ENCODE measurements at regions of chr4 and their contacts with region 1.

Region 1: GRCh38 chr4:56977321-56978012 is at the start of gene NOA1:
- DNase-seq: peak; percentile 99
- ATAC-seq: peak; percentile 79 to 88 (median 85)
- H3K4me3 ChIP-seq: peak within 1 kb of the TSS; percentile 99
- H3K4me3 Mint-ChIP-seq: peak within 1 kb of the TSS; percentile 100
- H3K27ac ChIP-seq: peak within 1 kb of the TSS; percentile 74
- H3K27ac Mint-ChIP-seq: peak within 1 kb of the TSS; percentile 98 to 100
- H3K4me1 ChIP-seq: peaks cover 48% of the 10 kb centered on the region
- H3K4me1 Mint-ChIP-seq: peaks cover 57 to 61% of the 10 kb centered on the region in 2 donors
- H3K27me3 ChIP-seq: no peaks in the 10 kb centered on the region
- H3K27me3 Mint-ChIP-seq: no peaks in the 10 kb centered on the region
- CTCF ChIP-seq: no peak
- total RNA-seq, gene NOA1: 11.7 to 15.3 (median 13.8) TPM

Region 2: DNA sequence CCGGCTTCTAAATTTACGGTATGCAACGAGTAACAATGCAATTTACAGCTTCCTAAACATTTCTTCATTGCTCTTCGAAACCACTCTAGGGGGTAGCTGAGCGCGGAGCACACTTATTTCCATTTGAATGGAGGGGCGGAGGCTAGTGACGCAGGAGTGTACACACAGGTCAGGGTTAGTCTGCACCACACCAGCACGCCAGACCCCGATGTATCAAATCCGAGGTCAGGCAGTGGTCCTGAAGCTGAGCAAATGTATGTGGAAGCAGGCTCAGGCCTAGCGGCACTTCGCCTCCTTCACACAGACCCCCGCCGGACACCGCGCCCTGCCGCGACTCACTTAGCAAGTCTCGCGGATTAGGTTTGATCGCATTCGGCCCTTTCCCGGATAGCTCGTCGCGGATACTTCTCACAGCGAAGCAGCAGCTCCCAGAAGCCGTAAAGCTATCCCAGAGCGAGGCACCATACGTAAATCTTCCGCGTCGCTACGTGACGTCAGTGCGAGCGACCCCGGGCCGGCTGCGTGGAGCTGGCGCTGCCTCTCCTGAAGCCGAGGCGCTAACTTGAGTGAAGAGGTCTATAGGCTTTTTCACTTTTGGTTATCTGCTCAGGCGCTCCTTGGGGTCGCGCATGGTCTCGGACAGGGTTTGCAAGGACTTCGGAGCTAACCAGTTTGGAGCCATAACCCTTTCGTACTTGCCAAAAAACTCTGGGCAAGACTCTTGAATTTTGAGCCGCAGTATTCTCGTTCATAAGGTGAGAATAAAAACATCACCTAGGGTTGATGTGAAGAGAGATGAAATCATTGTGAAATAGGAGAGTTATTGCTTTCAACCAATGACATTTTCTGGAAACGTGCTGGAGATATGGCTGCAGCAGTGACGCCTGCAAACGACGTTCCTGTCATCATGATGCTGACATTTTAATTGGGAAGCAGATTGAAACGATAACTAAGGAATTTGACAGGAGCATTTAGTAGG is 590.2 kb before region 1 on chr4 and contains the start of gene AASDH:
- intact Hi-C with region 1: loop called (anchors 1 kb)
- DNase-seq: peak; percentile 97 to 98
- ATAC-seq: peak; percentile 84 to 92 (median 86)
- H3K4me3 ChIP-seq: peak within 1 kb of the TSS; percentile 73
- H3K4me3 Mint-ChIP-seq: peak within 1 kb of the TSS; percentile 98
- H3K27ac ChIP-seq: peak within 1 kb of the TSS; percentile 94
- H3K27ac Mint-ChIP-seq: peak within 1 kb of the TSS; percentile 98 to 99
- H3K4me1 ChIP-seq: peaks cover 11% of the 10 kb centered on the region
- H3K4me1 Mint-ChIP-seq: peaks cover 24 to 31% of the 10 kb centered on the region in 2 donors
- H3K27me3 ChIP-seq: no peaks in the 10 kb centered on the region
- H3K27me3 Mint-ChIP-seq: no peaks in the 10 kb centered on the region
- CTCF ChIP-seq: no peak
- total RNA-seq, gene AASDH: 9.5 to 14.2 (median 9.6) TPM

Region 3: GRCh38 chr4:56907489-56908205 is 69.8 kb before region 1 on chr4 and contains the start of gene REST:
- intact Hi-C with region 1: loop called (anchors 1 kb)
- DNase-seq: peak; percentile 88 to 91
- ATAC-seq: peak; percentile 67 to 88 (median 71)
- H3K4me3 ChIP-seq: peak within 1 kb of the TSS; percentile 95
- H3K4me3 Mint-ChIP-seq: peak within 1 kb of the TSS; percentile 94
- H3K27ac ChIP-seq: peak within 1 kb of the TSS; percentile 58
- H3K27ac Mint-ChIP-seq: peak within 1 kb of the TSS; percentile 91 to 93
- H3K4me1 ChIP-seq: peaks cover 22% of the 10 kb centered on the region
- H3K4me1 Mint-ChIP-seq: peaks cover 32 to 40% of the 10 kb centered on the region in 2 donors
- H3K27me3 ChIP-seq: no peaks in the 10 kb centered on the region
- H3K27me3 Mint-ChIP-seq: no peaks in the 10 kb centered on the region
- CTCF ChIP-seq: no peak
- total RNA-seq, gene REST: 52.1 to 71.3 (median 67.6) TPM

Region 4: GRCh38 chr4:57080781-57081650 is 103.5 kb after region 1 on chr4:
- intact Hi-C with region 1: loop called (anchors 5 kb)
- DNase-seq: no peak
- ATAC-seq: peak; percentile 62 to 79 (median 79)
- H3K4me3 ChIP-seq: no peak overlapping the region
- H3K4me3 Mint-ChIP-seq: peak overlapping the region; percentile 72
- H3K27ac ChIP-seq: peak overlapping the region; percentile 70
- H3K27ac Mint-ChIP-seq: peak overlapping the region; percentile 89 to 91
- H3K4me1 ChIP-seq: peaks cover 36% of the 10 kb centered on the region
- H3K4me1 Mint-ChIP-seq: peaks cover 70 to 84% of the 10 kb centered on the region in 2 donors
- H3K27me3 ChIP-seq: no peaks in the 10 kb centered on the region
- H3K27me3 Mint-ChIP-seq: no peaks in the 10 kb centered on the region
- CTCF ChIP-seq: no peak

Region 5: GRCh38 chr4:57110640-57111511 is 133.4 kb after region 1 on chr4:
- intact Hi-C with region 1: loop called (anchors 5 kb)
- DNase-seq: peak; percentile 23 to 42
- ATAC-seq: peak; percentile 34 to 62 (median 58)
- H3K4me3 ChIP-seq: peak overlapping the region; percentile 39
- H3K4me3 Mint-ChIP-seq: peak overlapping the region; percentile 98
- H3K27ac ChIP-seq: peak overlapping the region; percentile 74
- H3K27ac Mint-ChIP-seq: peak overlapping the region; percentile 91 to 97
- H3K4me1 ChIP-seq: peaks cover 39% of the 10 kb centered on the region
- H3K4me1 Mint-ChIP-seq: peaks cover 87% of the 10 kb centered on the region in 2 donors
- H3K27me3 ChIP-seq: no peaks in the 10 kb centered on the region
- H3K27me3 Mint-ChIP-seq: no peaks in the 10 kb centered on the region
- CTCF ChIP-seq: no peak

Measured in natural killer cell (primary cell).